ENCODE measurements at regions of chr6 and their contacts with region 1.

Region 1: GRCh38 chr6:63571881-63572732 is at the starts of genes LOC128125822 and PTP4A1:
- DNase-seq: peak; percentile 96 to 98
- ATAC-seq: peak; percentile 97 to 100 (median 98)
- H3K4me3 ChIP-seq: peak within 1 kb of the TSS; percentile 77 to 97 (median 94)
- H3K27ac ChIP-seq: peak within 1 kb of the TSS; percentile 95 to 100 (median 99)
- H3K4me1 ChIP-seq: peaks cover 0 to 39% (median 24%) of the 10 kb centered on the region in 9 donors
- H3K27me3 ChIP-seq: no peaks in the 10 kb centered on the region
- CTCF ChIP-seq: no peak
- total RNA-seq, gene PTP4A1: 30.0 to 69.9 (median 51.3) TPM

Region 2: DNA sequence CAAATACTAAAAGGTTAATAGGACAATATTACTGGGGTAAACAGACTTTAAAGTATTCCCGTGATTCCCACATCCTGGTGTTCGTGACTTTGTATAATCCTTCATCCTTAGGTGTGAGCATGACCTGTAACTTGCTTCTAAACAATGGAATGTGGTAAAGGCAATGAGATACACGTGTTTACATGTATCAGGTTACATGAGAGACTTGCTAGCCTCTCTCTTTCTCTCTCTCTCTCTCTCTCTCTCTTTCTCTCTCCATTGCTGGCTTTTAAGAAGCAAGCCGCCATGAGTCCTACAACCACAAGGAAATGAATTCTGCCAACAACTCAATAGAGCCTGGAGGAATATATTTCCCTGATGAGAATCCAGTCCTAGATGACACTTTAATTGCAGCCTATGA is 168.4 kb before region 1 on chr6:
- intact Hi-C with region 1: no loop called
- DNase-seq: no peak
- ATAC-seq: no peak
- H3K4me3 ChIP-seq: no peak overlapping the region
- H3K27ac ChIP-seq: no peak overlapping the region
- H3K4me1 ChIP-seq: no peaks in the 10 kb centered on the region
- H3K27me3 ChIP-seq: no peaks in the 10 kb centered on the region
- CTCF ChIP-seq: no peak

Region 3: DNA sequence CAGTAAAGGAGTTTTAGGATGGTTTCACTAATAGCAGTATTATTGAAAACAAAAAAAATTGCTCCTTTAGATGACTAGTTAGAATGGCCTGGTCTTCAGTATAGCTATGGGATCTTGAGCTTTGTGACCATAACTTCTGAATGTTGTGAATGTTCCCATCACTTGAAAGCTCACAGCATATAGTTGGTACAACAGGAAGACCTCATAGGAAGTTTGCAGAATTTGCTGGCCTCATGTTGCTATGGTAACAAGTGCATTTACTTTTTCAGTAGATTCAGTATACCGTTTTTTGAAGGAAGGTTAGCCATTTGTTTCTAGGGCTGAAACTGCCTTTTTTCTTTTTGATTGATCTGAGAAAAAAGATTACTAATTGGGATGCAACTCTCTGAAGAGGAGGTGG is 71.8 kb after region 1 on chr6:
- intact Hi-C with region 1: loop called in 4 of 10 experiments (anchors 2 to 10 kb)
- DNase-seq: no peak
- ATAC-seq: no peak
- H3K4me3 ChIP-seq: no peak overlapping the region
- H3K27ac ChIP-seq: no peak overlapping the region
- H3K4me1 ChIP-seq: peaks cover 0 to 86% (median 73%) of the 10 kb centered on the region in 9 donors
- H3K27me3 ChIP-seq: no peaks in the 10 kb centered on the region
- CTCF ChIP-seq: no peak

Region 4: DNA sequence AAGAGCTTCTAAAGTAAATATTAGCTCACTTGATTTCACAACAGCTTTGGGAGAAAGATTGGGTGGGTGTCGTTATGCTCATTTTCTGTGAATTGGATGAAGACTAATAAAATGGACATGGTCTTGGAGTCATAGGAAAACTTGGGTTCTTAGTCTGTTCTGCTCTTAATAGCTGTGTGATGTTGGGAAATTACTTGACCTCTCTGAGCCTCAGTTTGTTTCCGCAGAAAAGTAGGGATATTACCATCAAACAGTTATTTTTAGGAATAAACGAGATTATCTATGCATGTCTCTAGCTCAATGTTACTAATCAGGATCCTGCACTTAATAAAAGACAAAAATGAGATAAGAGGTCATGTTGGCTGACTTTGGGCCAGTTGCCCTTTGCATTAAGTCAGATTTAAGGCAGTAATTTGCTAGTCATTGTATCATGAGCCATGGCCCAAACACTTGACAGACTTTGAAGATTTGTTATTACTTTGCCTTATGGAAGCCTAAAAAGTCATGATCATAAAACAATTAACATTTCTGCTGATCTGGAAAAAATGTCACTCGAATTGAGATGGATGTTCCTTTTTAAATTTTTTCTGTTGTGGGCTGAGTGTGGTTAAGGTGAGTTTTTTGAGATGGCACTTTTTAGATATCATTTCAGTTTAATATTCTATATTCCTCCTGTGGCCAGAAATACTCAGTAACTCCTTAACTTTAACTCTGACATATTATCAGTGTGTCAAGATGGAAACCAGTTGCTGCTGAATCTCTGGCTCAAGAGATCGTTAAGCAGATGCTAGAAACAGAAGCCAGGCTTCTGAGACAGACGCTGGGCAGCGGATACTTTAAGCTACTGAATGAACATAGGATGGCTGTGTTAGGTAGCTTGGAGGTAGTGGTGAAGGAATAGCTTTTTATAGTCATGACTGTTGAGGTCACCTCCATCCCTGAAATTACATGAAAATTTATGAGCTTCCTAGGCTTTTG is 355.1 kb after region 1 on chr6:
- intact Hi-C with region 1: no loop called
- DNase-seq: no peak
- ATAC-seq: no peak
- H3K4me3 ChIP-seq: no peak overlapping the region
- H3K27ac ChIP-seq: no peak overlapping the region
- H3K4me1 ChIP-seq: peaks cover 0 to 5% (median 0%) of the 10 kb centered on the region in 9 donors
- H3K27me3 ChIP-seq: peaks cover 0 to 6% (median 0%) of the 10 kb centered on the region in 7 donors
- CTCF ChIP-seq: no peak

Region 5: GRCh38 chr6:63947792-63948529 is 375.9 kb after region 1 on chr6:
- intact Hi-C with region 1: no loop called
- DNase-seq: no peak
- ATAC-seq: no peak
- H3K4me3 ChIP-seq: no peak overlapping the region
- H3K27ac ChIP-seq: no peak overlapping the region
- H3K4me1 ChIP-seq: no peaks in the 10 kb centered on the region
- H3K27me3 ChIP-seq: no peaks in the 10 kb centered on the region
- CTCF ChIP-seq: no peak